CD14-positive monocyte (primary cell): ENCODE measurements at regions of chr6 and their contacts with region 1.

Region 1: GRCh38 chr6:36780442-36781177 is 58.6 kb downstream of the CPNE5 start:
- DNase-seq: peak; percentile 46 to 51 (median 46)
- H3K4me3 ChIP-seq: peak overlapping the region in 1 of 3 experiments; percentile 33
- H3K4me3 Mint-ChIP-seq: peak overlapping the region in 1 of 2 donors; percentile 44
- H3K27ac ChIP-seq: no peak overlapping the region
- H3K27ac Mint-ChIP-seq: peak overlapping the region; percentile 9 to 87 (median 60)
- H3K4me1 ChIP-seq: peaks cover 22 to 29% of the 10 kb centered on the region in 2 donors
- H3K4me1 Mint-ChIP-seq: peaks cover 30% of the 10 kb centered on the region
- H3K27me3 ChIP-seq: no peaks in the 10 kb centered on the region
- H3K27me3 Mint-ChIP-seq: peaks cover 4 to 17% (median 14%) of the 10 kb centered on the region in 3 donors
- CTCF ChIP-seq: no peak

Region 2: GRCh38 chr6:36851149-36851614 is 70.6 kb after region 1 on chr6:
- intact Hi-C with region 1: loop called in 1 of 2 experiments (anchors 5 kb)
- DNase-seq: peak; percentile 41 to 69 (median 58)
- H3K4me3 ChIP-seq: no peak overlapping the region
- H3K4me3 Mint-ChIP-seq: peak overlapping the region in 1 of 2 donors; percentile 30
- H3K27ac ChIP-seq: no peak overlapping the region
- H3K27ac Mint-ChIP-seq: peak overlapping the region in 1 of 7 donors; percentile 94
- H3K4me1 ChIP-seq: peaks cover 49 to 55% of the 10 kb centered on the region in 2 donors
- H3K4me1 Mint-ChIP-seq: peaks cover 59% of the 10 kb centered on the region
- H3K27me3 ChIP-seq: no peaks in the 10 kb centered on the region
- H3K27me3 Mint-ChIP-seq: peaks cover 3 to 9% (median 6%) of the 10 kb centered on the region in 3 donors
- CTCF ChIP-seq: peak; percentile 84